MCF 10A (cell line): ENCODE measurements at regions of chr3 and their contacts with region 1.

Region 1: DNA sequence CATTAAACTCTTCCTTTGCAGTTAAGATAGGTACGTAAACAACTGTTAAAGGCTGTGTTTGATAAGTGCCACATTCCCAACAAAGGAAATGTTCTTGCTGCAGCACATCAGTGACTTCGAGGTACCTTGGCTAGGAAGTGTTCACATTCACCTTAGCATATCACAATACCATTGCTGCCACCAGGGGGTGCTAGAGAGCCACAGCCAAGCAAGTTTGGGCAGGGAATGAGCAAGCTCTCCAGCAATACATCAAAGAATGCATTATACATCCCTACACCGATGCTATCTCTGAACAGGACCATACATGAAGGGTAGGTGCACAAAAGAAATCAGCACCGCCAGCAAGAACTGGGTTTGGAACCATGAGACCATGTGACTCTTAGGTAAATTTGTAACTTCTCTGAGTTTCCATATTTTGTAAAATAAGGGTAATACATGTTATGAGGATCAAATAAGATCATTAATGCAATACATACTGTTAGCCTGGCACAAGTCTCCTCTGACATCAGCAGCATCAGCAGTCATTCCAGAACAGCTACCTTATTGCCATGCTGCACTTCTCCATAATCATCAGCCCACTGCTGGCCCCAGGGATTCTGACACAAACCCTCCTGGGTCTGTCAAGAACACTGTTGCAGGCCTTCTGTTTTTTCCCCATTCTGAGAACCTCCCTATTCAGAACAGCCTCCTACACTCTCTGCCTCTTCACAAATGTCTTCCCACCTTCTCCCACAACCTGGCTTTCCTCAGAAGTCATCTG is 37.6 kb downstream of the RYK start:
- DNase-seq: peak; percentile 87
- H3K4me3 Mint-ChIP-seq: no peak overlapping the region
- H3K27ac Mint-ChIP-seq: peak overlapping the region; percentile 36
- H3K4me1 Mint-ChIP-seq: peaks cover 26% of the 10 kb centered on the region
- H3K27me3 Mint-ChIP-seq: no peaks in the 10 kb centered on the region
- CTCF ChIP-seq: peak; percentile 91

Region 2: GRCh38 chr3:133927540-133928066 is 285.5 kb before region 1 on chr3:
- CTCF ChIA-PET with region 1: interaction called, 68 read pairs
- POLR2A ChIA-PET with region 1: interaction called, 4 read pairs
- intact Hi-C with region 1: loop called (anchors 1 kb)
- DNase-seq: no peak
- H3K4me3 Mint-ChIP-seq: no peak overlapping the region
- H3K27ac Mint-ChIP-seq: no peak overlapping the region
- H3K4me1 Mint-ChIP-seq: peaks cover 13% of the 10 kb centered on the region
- H3K27me3 Mint-ChIP-seq: peaks cover 21% of the 10 kb centered on the region
- CTCF ChIP-seq: peak; percentile 71

Region 3: GRCh38 chr3:134197681-134198261 is 15.3 kb before region 1 on chr3:
- CTCF ChIA-PET with region 1: interaction called, 248 read pairs
- POLR2A ChIA-PET with region 1: interaction called, 33 read pairs
- intact Hi-C with region 1: loop called (anchors 2 kb)
- DNase-seq: peak; percentile 76
- H3K4me3 Mint-ChIP-seq: no peak overlapping the region
- H3K27ac Mint-ChIP-seq: peak overlapping the region; percentile 20
- H3K4me1 Mint-ChIP-seq: peaks cover 29% of the 10 kb centered on the region
- H3K27me3 Mint-ChIP-seq: no peaks in the 10 kb centered on the region
- CTCF ChIP-seq: peak; percentile 83

Region 4: GRCh38 chr3:134242649-134243617 is 29.8 kb after region 1 on chr3:
- CTCF ChIA-PET with region 1: interaction called, 41 read pairs
- POLR2A ChIA-PET with region 1: interaction called, 13 read pairs
- intact Hi-C with region 1: no loop called
- DNase-seq: peak; percentile 95
- H3K4me3 Mint-ChIP-seq: peak overlapping the region; percentile 41
- H3K27ac Mint-ChIP-seq: peak overlapping the region; percentile 96
- H3K4me1 Mint-ChIP-seq: peaks cover 65% of the 10 kb centered on the region
- H3K27me3 Mint-ChIP-seq: no peaks in the 10 kb centered on the region
- CTCF ChIP-seq: no peak

Region 5: DNA sequence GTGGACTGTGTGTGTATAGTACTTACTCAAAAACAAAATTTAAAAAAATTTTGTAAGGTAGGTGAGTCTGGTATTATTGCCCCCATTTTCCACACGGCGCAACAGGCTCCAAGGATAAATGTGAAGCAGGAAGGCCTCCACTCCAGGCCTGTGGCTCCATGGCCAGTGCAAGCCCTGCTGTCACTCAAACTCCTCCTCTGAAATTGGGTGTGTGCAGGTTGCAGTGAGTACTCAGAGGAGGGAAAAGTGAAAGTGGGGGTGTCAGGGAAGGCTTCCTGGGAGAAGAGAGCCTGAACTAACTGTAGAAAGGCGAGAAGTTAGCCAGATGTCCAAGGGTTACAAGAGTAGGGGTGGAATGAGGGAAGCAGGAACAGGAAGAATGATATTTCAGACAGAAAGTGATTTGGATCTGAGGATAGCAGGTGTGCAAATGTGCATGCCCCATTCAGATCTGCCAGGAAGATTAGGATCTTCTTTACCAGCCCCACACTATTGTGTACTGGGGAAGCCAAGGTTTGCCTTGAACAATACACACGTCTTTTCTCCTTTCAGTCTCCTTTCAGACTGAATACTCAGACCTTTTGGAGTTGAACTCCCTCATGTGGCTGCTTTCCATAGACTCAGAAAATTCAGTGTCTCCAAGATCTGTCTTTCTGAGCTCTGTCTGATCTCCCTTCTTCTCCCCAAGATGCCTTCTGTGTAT is 86.2 kb after region 1 on chr3:
- CTCF ChIA-PET with region 1: interaction called, 224 read pairs
- POLR2A ChIA-PET with region 1: interaction called, 8 read pairs
- intact Hi-C with region 1: loop called (anchors 1 kb)
- DNase-seq: peak; percentile 47
- H3K4me3 Mint-ChIP-seq: no peak overlapping the region
- H3K27ac Mint-ChIP-seq: peak overlapping the region; percentile 73
- H3K4me1 Mint-ChIP-seq: peaks cover 15% of the 10 kb centered on the region
- H3K27me3 Mint-ChIP-seq: no peaks in the 10 kb centered on the region
- CTCF ChIP-seq: peak; percentile 15

Region 6: DNA sequence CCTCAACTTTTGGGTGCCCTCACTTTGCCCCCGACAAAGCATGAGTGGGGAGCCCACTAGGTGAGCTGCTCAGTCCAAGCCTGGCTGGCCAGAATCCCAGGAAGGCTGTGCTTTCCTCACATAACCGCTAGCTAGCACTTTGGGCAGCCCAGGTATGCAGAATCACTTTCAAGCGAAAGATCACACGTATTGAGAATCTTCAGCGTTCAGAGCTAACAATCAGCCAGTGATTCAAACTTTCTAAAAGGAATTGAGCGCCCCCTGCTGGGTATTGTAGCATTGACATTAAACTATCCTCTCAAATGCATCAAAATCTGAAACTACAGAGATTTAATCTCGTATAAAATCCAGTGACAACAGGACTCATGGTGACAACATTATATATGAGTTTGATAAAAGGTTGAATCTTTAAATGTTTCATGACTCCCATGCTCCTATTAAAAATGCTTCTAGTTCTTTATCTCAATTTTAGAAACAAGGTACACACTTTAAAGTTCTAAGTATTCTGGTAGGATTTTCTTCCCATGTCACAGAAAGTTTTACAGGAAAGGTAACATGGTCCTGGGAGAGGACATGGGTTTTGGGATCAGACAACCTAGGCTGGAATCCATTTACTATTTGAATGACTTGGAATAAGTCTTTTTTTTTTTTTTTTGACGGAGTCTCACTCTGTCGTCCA is 260.9 kb after region 1 on chr3:
- CTCF ChIA-PET with region 1: interaction called, 69 read pairs
- POLR2A ChIA-PET with region 1: interaction called, 3 read pairs
- intact Hi-C with region 1: loop called (anchors 1 kb)
- DNase-seq: peak; percentile 90
- H3K4me3 Mint-ChIP-seq: no peak overlapping the region
- H3K27ac Mint-ChIP-seq: no peak overlapping the region
- H3K4me1 Mint-ChIP-seq: peaks cover 31% of the 10 kb centered on the region
- H3K27me3 Mint-ChIP-seq: no peaks in the 10 kb centered on the region
- CTCF ChIP-seq: peak; percentile 60